K562 (cell line): ENCODE measurements at regions of chr2 and their contacts with region 1.

Region 1: GRCh38 chr2:25071966-25072365 is 30.1 kb downstream of the EFR3B start:
- DNase-seq: no peak
- ATAC-seq: no peak
- H3K4me3 ChIP-seq: no peak overlapping the region
- H3K27ac ChIP-seq: no peak overlapping the region
- H3K4me1 ChIP-seq: no peaks in the 10 kb centered on the region
- H3K27me3 ChIP-seq: peaks cover 13 to 54% of the 10 kb centered on the region in 2 experiments
- CTCF ChIP-seq: no peak
- EP300 ChIP-seq: no peak
- POLR2A ChIP-seq: no peak
- RAD21 ChIP-seq: no peak

Region 2: DNA sequence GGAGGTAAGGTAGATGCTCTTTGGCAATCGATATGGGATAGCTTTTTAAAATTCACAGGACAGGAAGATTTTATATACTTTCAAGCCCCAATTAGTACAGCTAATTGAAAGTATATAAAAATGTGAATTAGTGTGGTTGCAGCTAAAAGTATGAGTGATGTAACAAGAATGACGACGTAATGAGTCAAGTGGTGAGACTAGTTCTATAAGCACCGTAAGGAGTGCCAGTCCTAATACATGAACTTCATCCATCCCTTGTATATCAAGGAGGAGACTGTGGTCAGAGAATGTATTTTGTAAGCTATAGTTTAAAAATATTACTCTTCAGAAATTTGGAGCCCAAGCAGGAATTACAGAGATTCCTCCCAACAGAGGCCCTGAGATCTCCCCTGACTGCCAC is 126.1 kb before region 1 on chr2:
- CTCF ChIA-PET with region 1: no interaction called
- POLR2A ChIA-PET with region 1: no interaction called
- in situ Hi-C with region 1: no loop called
- intact Hi-C with region 1: no loop called
- DNase-seq: no peak
- ATAC-seq: no peak
- H3K4me3 ChIP-seq: no peak overlapping the region
- H3K27ac ChIP-seq: no peak overlapping the region
- H3K4me1 ChIP-seq: no peaks in the 10 kb centered on the region
- H3K27me3 ChIP-seq: no peaks in the 10 kb centered on the region
- CTCF ChIP-seq: no peak
- EP300 ChIP-seq: no peak
- POLR2A ChIP-seq: no peak
- RAD21 ChIP-seq: no peak

Region 3: DNA sequence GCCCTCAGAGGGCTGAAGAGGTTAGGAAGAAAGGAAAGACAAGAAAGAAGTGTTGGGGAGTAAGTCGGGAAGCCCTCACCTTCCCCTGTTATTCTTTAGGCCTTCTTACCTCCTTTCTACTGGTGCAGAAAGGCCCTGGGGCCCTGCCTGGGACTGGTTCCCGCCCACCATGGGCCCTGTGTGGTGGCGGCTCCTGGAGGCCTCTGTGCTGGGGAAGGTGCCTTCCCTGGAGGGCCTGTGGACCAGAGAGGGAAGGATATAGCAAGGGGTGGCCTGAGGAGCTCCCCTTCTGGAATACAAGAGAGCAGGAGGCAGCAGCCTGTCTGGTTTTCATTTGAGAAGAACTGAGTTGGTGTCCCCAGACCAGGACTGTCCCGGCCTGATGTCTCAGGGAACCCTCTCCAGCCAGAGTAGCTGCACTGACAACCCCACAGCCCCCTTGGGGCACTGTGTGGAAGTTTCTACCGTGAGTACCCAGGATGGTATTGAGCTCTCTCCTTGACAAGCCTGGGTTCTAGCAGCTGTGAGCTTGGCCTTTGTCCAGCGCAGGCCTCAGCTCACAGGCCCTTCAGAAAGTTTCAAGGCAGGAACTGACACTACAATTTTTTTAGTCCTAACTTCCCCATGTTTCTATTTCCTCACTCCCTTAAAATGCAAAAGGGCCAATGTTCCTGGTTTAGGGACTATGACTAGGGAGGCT is 17.0 kb after region 1 on chr2:
- CTCF ChIA-PET with region 1: no interaction called
- POLR2A ChIA-PET with region 1: interaction called, 13 read pairs
- in situ Hi-C with region 1: no loop called
- intact Hi-C with region 1: no loop called
- DNase-seq: no peak
- ATAC-seq: no peak; the same call in 2 of the 3 replicates
- H3K4me3 ChIP-seq: no peak overlapping the region
- H3K27ac ChIP-seq: no peak overlapping the region
- H3K4me1 ChIP-seq: no peaks in the 10 kb centered on the region; a peak in 1 of 5 replicates
- H3K27me3 ChIP-seq: peaks cover 3 to 41% of the 10 kb centered on the region in 2 experiments; a peak in 3 of 5 replicates
- CTCF ChIP-seq: no peak
- EP300 ChIP-seq: no peak
- POLR2A ChIP-seq: no peak
- RAD21 ChIP-seq: no peak

Region 4: DNA sequence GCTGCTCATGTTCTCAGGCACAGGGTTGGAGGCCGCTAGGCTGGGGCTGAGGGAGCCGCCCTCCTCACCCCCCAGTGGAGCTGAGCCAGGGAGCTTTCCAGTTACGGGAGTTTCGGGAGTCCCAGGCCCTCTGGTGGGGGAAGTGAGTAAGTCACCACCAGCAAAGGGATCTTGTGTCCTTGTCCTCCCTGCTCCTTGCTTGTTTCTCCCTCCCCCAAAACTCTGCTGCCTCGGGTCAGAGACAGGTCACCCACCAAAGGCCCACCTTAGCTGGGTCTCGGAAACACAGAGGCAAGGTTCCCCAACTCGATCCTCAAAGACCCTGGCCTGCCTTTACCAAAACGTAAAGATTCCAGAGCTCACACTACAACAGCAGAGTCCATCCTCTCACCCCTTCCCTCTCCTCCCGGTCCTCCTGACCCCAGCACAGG is 156.9 kb after region 1 on chr2:
- CTCF ChIA-PET with region 1: no interaction called
- POLR2A ChIA-PET with region 1: no interaction called
- in situ Hi-C with region 1: no loop called
- intact Hi-C with region 1: no loop called
- DNase-seq: peak; percentile 90 to 91 (median 90)
- ATAC-seq: peak; percentile 96
- H3K4me3 ChIP-seq: no peak overlapping the region
- H3K27ac ChIP-seq: no peak overlapping the region
- H3K4me1 ChIP-seq: peaks cover 9 to 29% of the 10 kb centered on the region in 2 experiments; a peak in 4 of 5 replicates
- H3K27me3 ChIP-seq: no peaks in the 10 kb centered on the region
- CTCF ChIP-seq: peak; percentile 83 to 88 (median 85)
- EP300 ChIP-seq: no peak
- POLR2A ChIP-seq: no peak
- RAD21 ChIP-seq: peak; percentile 48 to 76